AG04449 (cell line): ENCODE measurements at regions of chr6 and their contacts with region 1.

Region 1: DNA sequence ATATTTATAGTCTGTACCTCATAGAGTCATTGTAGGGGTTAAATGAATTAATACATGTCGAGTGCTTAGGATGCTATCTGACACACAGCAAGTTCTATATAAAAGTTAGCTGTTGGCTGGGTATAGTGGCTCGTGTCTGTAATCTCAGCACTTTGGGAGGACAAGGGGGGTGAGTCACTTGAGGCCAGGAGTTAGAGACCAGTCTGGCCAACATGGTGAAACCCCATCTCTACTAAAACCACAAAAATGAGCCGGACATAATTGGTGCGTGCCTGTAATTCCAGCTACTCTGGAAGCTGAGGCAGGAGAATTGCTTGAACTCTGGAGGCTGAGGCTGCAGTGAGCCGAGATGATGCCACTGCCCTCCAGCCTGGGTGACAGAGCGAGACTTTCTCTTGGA is 222.9 kb downstream of the UBE3D start:
- DNase-seq: peak; percentile 55
- H3K4me3 ChIP-seq: no peak overlapping the region
- CTCF ChIP-seq: no peak

Region 2: GRCh38 chr6:82862543-82862942 is 19.8 kb after region 1 on chr6:
- CTCF ChIA-PET with region 1: no interaction called
- POLR2A ChIA-PET with region 1: interaction called, 11 read pairs
- DNase-seq: peak; percentile 83
- H3K4me3 ChIP-seq: no peak overlapping the region
- CTCF ChIP-seq: no peak